T-cell (primary cell): ENCODE measurements at regions of chr1 and their contacts with region 1.

Region 1: DNA sequence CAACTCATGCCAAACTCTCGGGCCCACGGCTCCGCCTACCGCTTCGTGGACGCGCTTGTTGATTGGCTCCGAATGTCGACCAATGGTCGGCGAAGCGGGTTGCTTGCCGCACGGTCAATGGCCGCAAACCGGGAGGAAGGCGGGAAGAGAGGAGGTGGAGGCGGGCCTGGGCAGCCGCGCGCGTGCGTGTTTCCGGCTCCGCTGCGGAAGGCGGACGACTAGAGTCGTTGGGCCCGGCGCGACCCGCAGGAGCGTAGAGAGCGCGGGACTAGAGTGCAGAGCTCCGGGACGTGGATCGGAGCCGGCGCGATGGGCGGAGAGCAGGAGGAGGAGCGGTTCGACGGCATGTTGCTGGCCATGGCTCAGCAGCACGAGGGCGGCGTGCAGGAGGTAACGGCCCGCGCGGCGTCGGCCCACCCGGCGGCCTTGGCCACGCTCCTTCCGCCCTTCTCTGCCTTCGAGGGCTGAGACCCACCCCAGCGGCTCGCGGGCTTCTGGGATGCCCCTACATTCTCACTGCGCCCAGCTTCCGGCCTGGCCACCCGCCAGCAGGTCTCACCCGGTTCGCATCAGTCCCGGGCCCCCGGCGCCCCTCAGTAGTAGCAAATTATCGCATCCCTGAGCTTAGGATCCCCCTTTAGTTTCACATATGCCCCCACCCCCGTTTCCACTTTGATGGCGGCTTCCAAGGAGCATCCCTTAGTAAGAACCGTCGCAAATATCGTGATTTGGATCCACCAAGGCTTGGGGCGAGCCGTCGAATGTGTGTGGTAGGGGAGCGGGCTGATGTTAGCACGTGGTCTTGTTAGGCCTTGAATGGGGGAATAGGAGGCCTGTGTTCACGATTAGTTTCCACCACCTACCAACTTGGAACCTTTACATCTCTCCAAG is at the start of gene NUDC:
- DNase-seq: peak; percentile 84 to 97 (median 95)
- ATAC-seq: peak; percentile 94 to 98 (median 97)
- H3K4me3 ChIP-seq: peak within 1 kb of the TSS; percentile 80 to 89
- H3K4me3 Mint-ChIP-seq: peak within 1 kb of the TSS; percentile 90 to 98 (median 92)
- H3K27ac ChIP-seq: peak within 1 kb of the TSS; percentile 87
- H3K27ac Mint-ChIP-seq: peak within 1 kb of the TSS; percentile 80 to 95
- H3K4me1 ChIP-seq: peaks cover 10 to 28% of the 10 kb centered on the region in 2 experiments
- H3K4me1 Mint-ChIP-seq: peaks cover 36 to 41% (median 37%) of the 10 kb centered on the region in 3 donors
- H3K27me3 ChIP-seq: no peaks in the 10 kb centered on the region
- H3K27me3 Mint-ChIP-seq: no peaks in the 10 kb centered on the region
- total RNA-seq, gene NUDC: 39.1 to 45.7 (median 43.2) TPM

Region 2: GRCh38 chr1:26900001-26900814 is 21.6 kb before region 1 on chr1 and contains the start of gene GPATCH3:
- CTCF ChIA-PET with region 1: no interaction called
- POLR2A ChIA-PET with region 1: interaction called in 1 of 2 experiments, 11 read pairs
- DNase-seq: peak; percentile 71 to 94 (median 83)
- ATAC-seq: peak; percentile 92 to 96 (median 94)
- H3K4me3 ChIP-seq: peak within 1 kb of the TSS; percentile 70 to 92
- H3K4me3 Mint-ChIP-seq: peak within 1 kb of the TSS; percentile 95 to 97 (median 97)
- H3K27ac ChIP-seq: peak within 1 kb of the TSS; percentile 78
- H3K27ac Mint-ChIP-seq: peak within 1 kb of the TSS; percentile 99
- H3K4me1 ChIP-seq: peaks cover 15 to 21% of the 10 kb centered on the region in 2 experiments
- H3K4me1 Mint-ChIP-seq: peaks cover 27 to 41% (median 31%) of the 10 kb centered on the region in 3 donors
- H3K27me3 ChIP-seq: no peaks in the 10 kb centered on the region
- H3K27me3 Mint-ChIP-seq: no peaks in the 10 kb centered on the region
- total RNA-seq, gene GPATCH3: 23.6 to 28.6 (median 27.6) TPM